Left ventricle myocardium superior (tissue), 1 donor: ENCODE measurements at regions of chr6 and their contacts with region 1.

Region 1: DNA sequence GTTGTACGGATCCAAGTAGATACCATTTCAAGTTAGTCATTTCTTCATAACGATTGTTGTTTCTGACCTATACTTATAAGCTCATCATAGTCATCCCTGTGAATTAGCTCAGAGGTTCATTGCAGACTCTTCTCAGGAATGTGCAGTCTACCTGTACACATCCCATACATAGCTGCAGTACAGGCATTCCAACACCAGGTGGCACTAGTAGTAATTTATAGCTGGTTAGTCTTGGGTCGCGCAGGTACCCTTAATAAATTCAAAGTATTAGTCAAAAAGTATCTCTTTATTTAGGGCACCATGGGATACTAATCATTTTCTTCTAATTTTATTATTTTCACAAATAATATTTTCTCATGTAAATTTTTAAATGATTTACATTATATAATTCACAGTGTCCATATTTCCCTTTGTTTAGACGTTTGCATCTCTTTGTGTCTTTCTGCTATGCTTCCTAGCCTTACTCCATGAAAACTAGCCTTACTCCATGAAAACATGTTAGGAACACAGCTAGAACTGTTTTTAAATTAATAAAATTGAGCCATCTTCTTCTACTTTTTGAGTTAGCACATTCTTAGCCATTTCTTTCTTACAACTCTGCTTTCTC is 128.6 kb upstream of the FAM83B start:
- DNase-seq: no peak
- ATAC-seq: peak; percentile 51

Region 2: DNA sequence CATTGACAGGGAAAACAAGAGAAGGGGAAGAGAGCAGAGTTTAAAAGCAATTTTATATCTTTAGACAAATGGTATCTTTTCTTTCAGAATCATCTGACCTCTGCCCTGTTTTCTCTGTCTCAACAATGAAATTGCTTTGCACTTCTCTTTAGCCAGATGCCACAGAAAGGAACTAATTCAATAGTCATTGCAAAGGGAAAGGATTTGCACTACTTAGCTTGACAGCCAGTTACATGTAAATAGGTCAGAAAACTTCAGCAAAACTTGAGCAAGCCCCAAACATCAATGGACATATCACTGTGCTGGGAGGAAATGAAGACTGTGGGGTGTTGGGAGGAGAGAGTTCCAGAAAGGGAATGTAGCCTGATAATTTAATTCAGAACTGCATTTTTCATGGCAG is 52.7 kb before region 1 on chr6:
- intact Hi-C with region 1: no loop called
- DNase-seq: no peak
- ATAC-seq: no peak

Region 3: GRCh38 chr6:55069132-55069781 is 351.3 kb after region 1 on chr6:
- intact Hi-C with region 1: loop called (anchors 10 kb)
- DNase-seq: no peak
- ATAC-seq: peak; percentile 27